ENCODE measurements at regions of chr2 and their contacts with region 1.

Region 1: DNA sequence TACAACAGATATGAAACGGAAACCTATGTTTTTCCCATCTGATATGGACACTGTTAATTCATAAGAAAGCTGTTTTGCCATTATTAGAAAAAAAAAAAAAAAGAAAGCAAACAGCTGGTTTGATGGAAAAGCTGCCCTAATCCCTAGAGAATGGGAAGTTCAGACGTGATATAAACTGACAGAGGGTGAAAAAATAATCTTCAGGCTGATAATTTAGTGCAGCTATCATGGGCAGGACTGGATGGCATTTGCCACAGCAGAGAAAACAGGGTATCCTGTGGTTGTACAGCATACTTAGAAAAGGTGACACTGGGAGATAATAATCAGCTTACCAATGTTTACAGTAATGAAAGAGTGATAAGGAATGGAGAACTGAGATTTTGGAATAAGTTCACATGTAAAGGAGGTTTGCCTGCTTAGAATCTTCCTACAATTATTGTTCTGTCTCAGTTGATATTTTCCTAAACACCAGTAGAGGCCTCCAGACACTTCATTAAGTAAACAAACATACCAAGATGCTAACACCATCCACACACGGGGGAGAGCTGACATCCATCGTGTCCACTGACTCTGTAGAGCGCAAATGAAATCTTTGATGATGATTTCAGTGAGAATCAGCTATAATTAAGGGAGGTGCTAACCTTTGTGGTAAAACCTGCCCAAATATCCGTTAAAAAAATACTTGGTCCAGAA is 211.6 kb upstream of the MMADHC start:
- DNase-seq: no peak
- ATAC-seq: no peak
- H3K4me3 ChIP-seq: no peak overlapping the region
- H3K27ac ChIP-seq: no peak overlapping the region
- H3K4me1 ChIP-seq: no peaks in the 10 kb centered on the region
- H3K27me3 ChIP-seq: no peaks in the 10 kb centered on the region
- CTCF ChIP-seq: peak in 1 of 5 experiments; percentile 14
- POLR2A ChIP-seq: no peak

Region 2: DNA sequence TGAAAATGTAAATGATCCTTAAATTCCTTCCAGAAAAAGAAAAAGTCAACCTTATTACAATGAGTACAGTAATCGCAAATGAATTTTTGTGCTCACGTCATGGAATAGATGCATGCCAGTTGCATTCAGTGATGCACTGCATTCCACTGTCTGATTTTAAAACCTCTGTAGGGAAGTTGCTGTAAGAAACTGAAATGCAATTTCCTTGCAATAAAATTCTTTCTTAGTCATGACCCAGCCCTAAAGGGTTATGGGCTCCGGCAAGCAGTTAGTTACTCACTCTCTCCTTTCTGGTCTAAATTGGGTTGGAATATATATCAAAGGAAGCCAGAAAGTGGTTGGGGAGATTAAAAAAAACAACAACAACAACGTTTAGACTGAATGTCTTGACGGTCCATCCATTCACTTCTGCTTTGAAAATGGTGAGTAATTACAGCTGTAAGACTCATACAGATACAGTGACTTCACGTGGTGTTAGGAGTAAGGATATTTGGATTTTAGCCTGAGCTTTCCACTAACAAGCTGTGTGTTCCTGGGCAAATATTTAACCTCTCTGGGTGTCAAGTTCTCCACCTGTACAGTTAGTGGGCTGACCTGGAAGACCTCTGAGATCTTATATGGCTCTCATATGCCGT is 697.0 kb after region 1 on chr2:
- in situ Hi-C with region 1: loop called in 2 of 4 experiments (anchors 10 to 25 kb)
- intact Hi-C with region 1: no loop called
- DNase-seq: no peak
- ATAC-seq: no peak
- H3K4me3 ChIP-seq: no peak overlapping the region
- H3K27ac ChIP-seq: no peak overlapping the region
- H3K4me1 ChIP-seq: no peaks in the 10 kb centered on the region
- H3K27me3 ChIP-seq: no peaks in the 10 kb centered on the region
- CTCF ChIP-seq: no peak
- POLR2A ChIP-seq: no peak

Measured in gastrocnemius medialis (tissue), 4 donors.